Heart right ventricle (tissue), 16 donors: ENCODE measurements at regions of chr4 and their contacts with region 1.

Region 1: GRCh38 chr4:139295206-139295941 is 5.9 kb upstream of the NAA15 start:
- DNase-seq: peak; percentile 97
- ATAC-seq: peak; percentile 96 to 99 (median 97)
- H3K4me3 ChIP-seq: peak overlapping the region; percentile 63 to 89 (median 80)
- H3K27ac ChIP-seq: peak overlapping the region; percentile 83 to 96 (median 94)
- H3K4me1 ChIP-seq: peaks cover 0 to 62% (median 28%) of the 10 kb centered on the region in 9 donors
- H3K27me3 ChIP-seq: no peaks in the 10 kb centered on the region
- CTCF ChIP-seq: peak in 8 of 9 donors; percentile 84 to 100 (median 97)

Region 2: DNA sequence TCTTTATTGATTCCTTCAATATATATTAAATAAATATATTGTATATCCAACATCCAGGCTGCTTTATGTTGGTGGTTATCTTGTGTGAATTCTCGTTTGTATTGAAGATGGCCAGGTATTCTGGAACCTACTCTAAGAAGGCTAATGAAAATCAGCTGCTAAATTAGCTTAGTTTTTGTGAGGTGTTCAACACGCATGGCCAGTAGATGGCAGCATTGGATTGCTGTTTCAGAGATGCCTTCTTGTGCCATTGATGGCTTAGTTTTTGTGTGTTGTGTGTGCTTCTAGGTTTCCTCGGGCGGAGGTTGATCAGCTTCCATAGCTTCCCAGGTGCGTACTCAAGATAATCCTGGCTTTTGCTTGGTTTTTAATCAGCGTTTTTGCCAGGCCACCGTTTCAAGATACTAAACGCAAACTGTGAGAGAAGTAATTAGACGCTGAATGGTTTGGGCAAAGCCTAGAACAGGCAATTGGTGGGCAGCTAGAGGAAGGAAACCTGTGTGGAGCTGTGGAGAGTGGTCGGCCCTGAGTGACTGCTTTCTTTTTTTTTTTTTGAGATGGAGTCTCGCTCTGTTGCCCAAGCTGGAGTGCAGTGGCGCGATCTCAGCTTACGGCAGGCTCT is 264.6 kb before region 1 on chr4:
- intact Hi-C with region 1: loop called in 9 of 10 experiments (anchors 2 to 10 kb)
- DNase-seq: peak in 1 of 2 donors; percentile 80
- ATAC-seq: peak in 7 of 8 donors; percentile 27 to 70 (median 44)
- H3K4me3 ChIP-seq: no peak overlapping the region
- H3K27ac ChIP-seq: peak overlapping the region in 1 of 10 donors; percentile 82
- H3K4me1 ChIP-seq: peaks cover 0 to 41% (median 9%) of the 10 kb centered on the region in 9 donors
- H3K27me3 ChIP-seq: no peaks in the 10 kb centered on the region
- CTCF ChIP-seq: peak; percentile 60 to 87 (median 81)

Region 3: DNA sequence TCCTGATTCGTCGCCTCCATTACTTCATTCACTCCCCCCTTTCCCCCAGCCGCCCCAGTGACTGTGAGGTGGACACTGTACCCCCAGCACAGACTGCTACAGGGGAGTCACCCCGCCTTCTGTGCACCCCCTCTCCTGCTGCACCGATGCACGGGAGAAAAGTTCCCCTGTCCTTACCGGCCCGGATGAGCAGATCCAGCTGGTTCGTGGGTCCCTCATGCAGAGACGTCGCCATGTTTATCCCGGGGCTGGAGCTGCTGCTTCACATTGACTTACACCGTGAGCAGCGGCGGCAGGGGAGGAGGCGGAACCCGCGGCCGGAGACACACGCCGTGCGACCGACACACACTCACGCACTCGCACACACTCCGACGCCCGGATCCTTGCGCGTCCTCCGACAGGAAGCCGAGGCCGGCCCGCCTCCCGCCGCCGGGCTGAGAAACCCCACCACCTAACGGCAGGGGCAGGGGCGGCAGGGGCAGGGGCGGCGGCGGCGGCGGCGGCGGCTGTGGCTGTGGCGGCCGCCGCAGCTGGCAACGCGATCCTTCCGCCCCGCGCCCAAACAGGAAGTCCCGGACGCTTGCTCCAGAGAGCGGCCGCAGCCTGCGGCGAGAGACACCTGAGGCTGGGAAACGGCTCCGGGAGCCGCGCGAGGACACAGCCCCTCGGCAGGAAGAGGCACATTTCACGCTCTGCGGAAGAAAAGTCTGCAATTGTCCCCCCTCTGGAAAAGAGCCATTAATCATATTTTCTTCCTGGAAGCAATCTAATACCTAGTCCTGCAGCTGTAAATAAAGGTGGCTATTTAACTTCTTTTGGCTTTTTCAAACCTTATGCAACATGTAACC is 211.2 kb before region 1 on chr4:
- intact Hi-C with region 1: loop called in 4 of 10 experiments (anchors 5 kb)
- DNase-seq: peak; percentile 89 to 90
- ATAC-seq: peak; percentile 71 to 92 (median 80)
- H3K4me3 ChIP-seq: peak overlapping the region; percentile 64 to 89 (median 78)
- H3K27ac ChIP-seq: peak overlapping the region; percentile 88 to 95 (median 93)
- H3K4me1 ChIP-seq: peaks cover 2 to 44% (median 38%) of the 10 kb centered on the region in 9 donors
- H3K27me3 ChIP-seq: no peaks in the 10 kb centered on the region
- CTCF ChIP-seq: peak in 8 of 9 donors; percentile 10 to 53 (median 39)

Region 4: DNA sequence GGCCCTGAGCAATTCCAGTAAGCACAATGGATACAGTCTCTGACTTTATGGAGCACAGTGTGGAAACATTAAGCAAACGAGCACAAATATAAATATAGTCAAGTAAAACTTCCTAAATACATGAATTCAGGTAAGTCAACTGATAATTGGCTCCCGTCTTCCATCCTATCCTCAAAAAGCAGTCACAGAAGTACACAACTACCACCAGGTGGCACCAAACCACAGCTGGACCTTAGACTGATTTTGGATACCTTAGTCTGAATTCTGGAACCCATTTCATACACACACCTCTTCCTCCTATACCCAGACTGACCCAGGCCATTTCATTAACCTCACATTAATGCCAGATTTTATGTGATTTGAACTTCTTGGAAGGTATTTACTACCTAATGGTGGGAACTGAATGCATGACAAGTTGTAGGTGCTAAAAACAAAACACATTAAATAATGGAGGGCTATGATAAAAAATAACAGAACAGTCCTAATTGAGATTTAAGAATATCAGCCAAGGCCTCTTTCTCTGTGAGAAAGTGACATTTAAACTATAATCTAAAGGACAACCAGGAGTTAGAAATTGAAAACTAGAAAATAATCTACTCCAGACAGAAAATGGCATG is 195.9 kb before region 1 on chr4:
- intact Hi-C with region 1: loop called in 8 of 10 experiments (anchors 1 to 5 kb)
- DNase-seq: peak; percentile 19 to 73
- ATAC-seq: peak; percentile 50 to 89 (median 72)
- H3K4me3 ChIP-seq: no peak overlapping the region
- H3K27ac ChIP-seq: no peak overlapping the region
- H3K4me1 ChIP-seq: no peaks in the 10 kb centered on the region
- H3K27me3 ChIP-seq: no peaks in the 10 kb centered on the region
- CTCF ChIP-seq: peak; percentile 73 to 93 (median 87)

Region 5: GRCh38 chr4:139184129-139184528 is 111.2 kb before region 1 on chr4:
- intact Hi-C with region 1: loop called in 4 of 10 experiments (anchors 5 to 10 kb)
- DNase-seq: no peak
- ATAC-seq: peak in 6 of 8 donors; percentile 52 to 61 (median 56)
- H3K4me3 ChIP-seq: no peak overlapping the region
- H3K27ac ChIP-seq: no peak overlapping the region
- H3K4me1 ChIP-seq: peaks cover 0 to 15% (median 0%) of the 10 kb centered on the region in 9 donors
- H3K27me3 ChIP-seq: no peaks in the 10 kb centered on the region
- CTCF ChIP-seq: peak in 6 of 9 donors; percentile 22 to 54 (median 38)

Region 6: GRCh38 chr4:139229534-139230039 is 65.8 kb before region 1 on chr4:
- intact Hi-C with region 1: loop called in 7 of 10 experiments (anchors 2 to 5 kb)
- DNase-seq: peak in 1 of 2 donors; percentile 12
- ATAC-seq: peak in 5 of 8 donors; percentile 52 to 71 (median 62)
- H3K4me3 ChIP-seq: no peak overlapping the region
- H3K27ac ChIP-seq: no peak overlapping the region
- H3K4me1 ChIP-seq: no peaks in the 10 kb centered on the region
- H3K27me3 ChIP-seq: no peaks in the 10 kb centered on the region
- CTCF ChIP-seq: peak; percentile 39 to 80 (median 72)